ENCODE measurements at regions of chr17 and their contacts with region 1.

Region 1: DNA sequence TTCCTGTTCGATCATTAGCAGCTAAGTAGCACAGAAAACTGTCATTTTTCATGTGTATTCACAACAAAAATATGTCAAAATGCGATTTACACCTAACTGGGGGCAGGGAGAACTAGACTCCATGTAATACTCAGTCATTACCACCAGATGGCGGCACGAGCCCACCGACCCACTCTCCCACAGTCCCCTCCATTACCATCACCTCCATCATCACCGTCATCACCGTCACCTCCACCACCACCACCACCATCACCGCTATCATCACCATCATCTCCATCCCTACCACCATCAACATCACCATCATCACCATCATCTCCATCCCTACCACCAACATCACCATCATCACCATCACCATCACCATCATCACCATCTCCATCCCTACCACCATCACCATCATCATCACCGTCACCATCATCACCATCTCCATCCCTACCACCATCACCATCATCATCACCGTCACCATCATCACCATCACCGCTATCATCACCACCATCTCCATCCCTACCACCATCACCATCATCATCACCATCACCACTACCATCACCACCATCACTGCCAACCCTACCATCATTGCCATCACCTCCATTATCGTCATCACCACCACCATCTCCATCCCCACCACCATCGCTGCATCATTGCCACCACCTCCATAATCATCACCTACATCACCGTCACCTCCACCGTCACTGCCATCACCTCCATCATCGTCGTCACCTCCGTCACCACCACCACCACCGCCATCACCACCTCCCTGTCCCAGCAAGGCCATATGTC is 14.4 kb downstream of the NDUFAF8 start:
- DNase-seq: no peak

Region 2: DNA sequence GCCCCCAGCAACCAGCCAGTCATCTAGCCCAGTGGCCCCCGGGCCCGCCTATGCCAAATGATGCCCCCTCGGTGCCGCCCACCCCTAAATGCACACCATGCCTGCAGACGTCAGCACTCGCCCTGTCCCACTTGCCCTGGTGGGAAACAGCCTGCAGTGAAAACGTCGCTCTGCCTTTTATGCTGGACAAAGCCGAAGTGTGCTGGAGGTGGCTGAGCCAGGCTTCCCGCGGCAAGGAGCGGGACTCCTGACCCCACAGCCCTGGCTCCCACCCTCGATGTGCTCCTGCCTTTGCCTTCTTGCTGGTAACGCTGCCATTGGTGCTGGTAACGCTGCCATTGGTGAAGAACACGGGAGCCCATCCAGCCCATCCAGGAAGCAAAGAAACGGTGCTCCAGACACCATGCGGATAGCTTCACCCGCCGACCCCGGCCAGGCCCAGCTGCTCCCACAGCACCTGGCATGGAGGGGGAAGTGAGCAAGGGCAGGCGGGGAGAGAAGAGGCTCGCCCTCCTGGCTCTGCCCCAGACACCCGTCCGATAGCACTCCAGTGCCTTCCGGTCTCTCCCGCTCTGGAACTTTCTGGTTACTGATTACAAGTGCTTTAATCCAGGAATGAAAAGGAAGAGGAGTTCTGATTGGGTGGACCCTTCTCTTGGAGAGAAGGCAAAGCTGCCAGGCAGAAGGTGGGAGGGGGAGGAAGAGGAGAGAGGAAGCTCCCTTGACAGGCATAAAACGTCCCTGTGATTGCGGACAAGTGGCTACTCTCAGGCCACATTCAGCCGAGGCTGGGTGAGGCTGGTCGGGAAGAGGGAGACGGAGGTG is 222.6 kb before region 1 on chr17:
- intact Hi-C with region 1: no loop called
- DNase-seq: peak; percentile 79

Region 3: GRCh38 chr17:81238817-81239600 is 14.5 kb before region 1 on chr17 and contains the starts of genes NDUFAF8 and TEPSIN:
- intact Hi-C with region 1: no loop called
- DNase-seq: peak; percentile 98
- total RNA-seq, gene NDUFAF8: 61.0 TPM
- total RNA-seq, gene TEPSIN: 12.6 TPM

Region 4: GRCh38 chr17:81537343-81537855 is 283.9 kb after region 1 on chr17:
- intact Hi-C with region 1: loop called (anchors 5 kb)
- DNase-seq: no peak